ENCODE measurements at regions of chr10 and their contacts with region 1.

Region 1: DNA sequence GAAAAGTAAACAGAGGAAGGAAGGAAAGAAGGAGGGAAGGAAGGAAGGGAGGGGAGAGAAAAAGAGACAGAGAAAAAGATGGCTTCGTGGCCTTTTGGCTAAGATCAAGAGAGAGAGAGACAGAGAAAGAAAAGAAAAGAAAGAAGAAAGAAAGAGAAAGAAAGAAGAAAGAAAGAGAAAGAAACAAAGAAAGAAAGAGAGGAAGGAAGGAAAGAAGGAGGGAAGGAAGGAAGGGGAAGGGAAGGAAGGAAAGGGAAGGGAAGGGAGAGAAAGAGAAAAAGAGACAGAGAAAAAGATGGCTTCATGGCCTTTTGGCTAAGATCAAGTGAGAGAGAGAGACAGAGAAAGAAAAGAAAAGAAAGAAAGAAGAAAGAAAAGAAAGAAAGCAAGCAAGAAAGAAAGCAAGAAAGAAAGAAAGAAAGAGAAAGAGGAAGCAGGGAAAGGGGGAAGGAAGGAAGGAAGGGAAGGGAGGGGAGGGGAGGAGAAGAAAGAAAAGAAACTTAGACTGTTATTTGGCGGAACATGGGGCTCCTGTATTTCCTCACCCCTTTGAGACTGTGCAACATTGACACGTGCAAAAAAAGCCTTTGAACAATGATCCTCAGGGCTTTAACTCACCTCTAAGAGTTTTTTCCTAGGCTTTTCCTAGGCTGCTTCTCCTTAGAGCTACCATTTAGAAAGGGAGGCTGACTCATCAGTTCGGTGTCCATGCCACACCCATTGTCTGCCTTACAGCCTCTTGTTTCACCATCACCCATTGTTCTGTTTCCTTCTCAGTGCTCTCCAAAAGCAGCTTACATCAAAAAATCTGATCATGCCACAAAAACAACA is 91.2 kb downstream of the PRLHR start:
- DNase-seq: peak; percentile 97
- H3K4me3 Mint-ChIP-seq: peak overlapping the region; percentile 55
- H3K27ac Mint-ChIP-seq: peak overlapping the region; percentile 96
- H3K4me1 Mint-ChIP-seq: peaks cover 50% of the 10 kb centered on the region
- H3K27me3 Mint-ChIP-seq: no peaks in the 10 kb centered on the region
- CTCF ChIP-seq: no peak

Region 2: GRCh38 chr10:118522791-118523498 is 18.7 kb after region 1 on chr10:
- CTCF ChIA-PET with region 1: interaction called, 10 read pairs
- POLR2A ChIA-PET with region 1: interaction called, 110 read pairs
- intact Hi-C with region 1: loop called (anchors 2 kb)
- DNase-seq: peak; percentile 88
- H3K4me3 Mint-ChIP-seq: no peak overlapping the region
- H3K27ac Mint-ChIP-seq: peak overlapping the region; percentile 43
- H3K4me1 Mint-ChIP-seq: peaks cover 27% of the 10 kb centered on the region
- H3K27me3 Mint-ChIP-seq: no peaks in the 10 kb centered on the region
- CTCF ChIP-seq: no peak

Region 3: DNA sequence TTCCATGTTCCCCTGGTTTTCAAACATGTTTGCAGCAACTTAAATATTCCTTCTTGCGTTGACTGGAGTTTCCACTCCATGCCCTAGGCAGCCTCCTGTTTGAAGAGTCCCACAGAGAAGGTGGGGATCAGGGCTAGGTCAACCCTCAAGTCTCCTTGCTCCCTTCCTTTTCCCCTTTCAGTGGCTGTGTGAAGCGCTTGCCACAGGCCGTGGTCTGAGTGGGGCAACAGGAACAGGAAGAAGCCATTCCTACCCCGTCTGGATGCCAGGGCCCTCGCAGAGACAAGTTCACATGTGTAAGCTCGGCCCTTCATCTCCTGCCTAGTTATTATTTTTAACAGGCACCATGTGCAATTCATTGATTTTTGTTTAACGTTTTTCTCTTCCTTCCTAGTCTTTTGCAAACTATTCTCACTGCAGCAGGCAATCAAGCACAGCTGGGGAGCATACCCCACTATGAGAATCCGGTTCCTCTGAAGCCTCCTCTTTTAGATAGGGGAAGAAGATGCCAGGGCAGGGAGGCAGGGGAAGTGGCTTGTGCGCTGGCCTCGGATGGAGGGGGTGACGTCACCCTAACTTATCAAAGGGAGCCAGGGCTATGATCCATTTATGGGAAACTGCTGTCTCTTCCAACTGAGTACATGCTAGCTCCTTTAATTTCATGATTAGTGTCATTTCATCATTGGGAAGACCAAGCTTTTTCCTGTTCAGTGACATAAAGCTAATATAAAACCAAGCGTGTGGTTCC is 27.0 kb after region 1 on chr10:
- CTCF ChIA-PET with region 1: interaction called, 10 read pairs
- POLR2A ChIA-PET with region 1: interaction called, 7 read pairs
- intact Hi-C with region 1: no loop called
- DNase-seq: no peak
- H3K4me3 Mint-ChIP-seq: no peak overlapping the region
- H3K27ac Mint-ChIP-seq: no peak overlapping the region
- H3K4me1 Mint-ChIP-seq: peaks cover 6% of the 10 kb centered on the region
- H3K27me3 Mint-ChIP-seq: no peaks in the 10 kb centered on the region
- CTCF ChIP-seq: no peak